ENCODE measurements at regions of chr11 and their contacts with region 1.

Region 1: DNA sequence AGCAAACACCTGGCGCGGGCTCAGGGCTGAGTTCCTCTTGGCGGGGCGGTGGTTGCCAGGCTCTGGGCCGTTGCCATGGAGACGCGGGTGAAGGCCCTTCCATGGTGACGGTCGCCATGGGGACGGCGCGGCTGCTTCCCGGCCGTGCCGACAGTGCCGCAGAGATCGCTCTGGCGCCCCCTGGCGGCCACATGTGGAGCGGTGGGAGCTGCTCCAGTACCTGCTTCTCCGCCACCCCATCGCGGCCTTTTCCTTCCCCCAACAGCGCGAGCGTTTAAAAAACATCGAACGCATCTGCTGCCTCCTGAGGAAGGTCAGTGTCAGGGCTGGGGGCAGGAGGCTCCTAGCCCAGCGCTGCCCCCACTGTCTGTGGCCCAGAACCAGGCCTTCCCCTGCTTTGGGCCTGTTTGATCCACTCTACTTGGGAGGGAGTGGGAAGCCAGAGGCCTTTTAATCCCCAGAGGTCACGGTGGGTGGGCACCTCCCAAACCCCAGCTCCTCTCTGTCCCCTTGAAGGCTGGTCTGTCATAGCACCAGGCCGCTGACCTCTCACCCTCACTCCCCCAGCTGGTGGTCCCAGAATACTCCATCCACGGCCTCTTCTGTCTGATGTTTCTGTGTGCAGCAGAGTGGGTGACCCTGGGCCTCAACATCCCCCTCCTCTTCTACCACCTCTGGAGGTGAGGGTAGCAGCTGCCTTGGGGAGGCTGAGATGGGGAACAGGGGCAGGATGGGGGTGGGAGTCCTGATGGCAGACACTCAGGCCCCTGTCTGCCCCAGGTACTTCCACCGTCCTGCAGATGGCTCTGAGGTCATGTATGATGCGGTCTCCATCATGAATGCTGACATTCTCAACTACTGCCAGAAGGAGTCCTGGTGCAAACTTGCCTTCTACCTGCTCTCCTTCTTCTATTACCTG is 4.8 kb downstream of the CNIH2 start:
- DNase-seq: peak; percentile 87
- H3K4me3 ChIP-seq: no peak overlapping the region
- CTCF ChIP-seq: peak; percentile 89

Region 2: DNA sequence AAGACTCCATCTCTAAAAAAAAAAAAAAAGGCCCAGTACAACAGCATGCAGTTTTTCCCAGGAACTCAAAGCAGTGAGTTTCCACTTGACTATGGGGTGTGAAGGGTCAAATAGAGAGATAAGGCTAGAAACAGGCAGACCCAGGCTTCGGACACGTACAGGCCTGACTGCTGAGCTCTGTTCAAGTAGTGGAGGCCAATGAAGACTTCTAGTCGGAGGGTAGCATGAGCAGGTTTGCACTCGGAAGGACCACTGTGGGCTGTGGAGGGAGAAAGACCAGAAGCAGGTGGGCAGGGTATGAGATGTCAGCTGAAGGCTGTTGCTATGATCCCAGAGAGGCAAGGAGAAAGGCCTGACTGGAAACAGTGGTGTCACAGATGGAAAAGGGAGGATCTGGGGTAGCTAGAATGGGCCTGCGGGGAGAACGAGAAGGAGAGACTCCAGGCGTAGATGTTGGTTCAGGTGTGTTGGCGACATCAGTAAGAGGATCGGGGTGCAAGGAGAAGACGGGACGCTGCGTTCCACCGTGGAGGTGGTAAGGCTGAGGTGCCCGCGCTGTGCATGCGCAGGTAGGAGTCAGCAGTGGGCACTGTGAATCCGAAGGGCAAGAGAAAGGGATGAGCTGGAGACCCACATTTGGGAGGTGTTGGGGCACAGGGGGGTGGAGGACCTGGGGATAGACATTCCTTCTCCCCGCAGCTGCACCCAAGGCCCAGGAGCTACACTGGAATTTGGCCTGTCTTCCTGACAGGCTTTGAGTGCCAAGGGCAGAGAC is 63.7 kb before region 1 on chr11:
- in situ Hi-C with region 1: loop called (anchors 5 kb)
- DNase-seq: no peak
- H3K4me3 ChIP-seq: no peak overlapping the region
- CTCF ChIP-seq: no peak

Region 3: GRCh38 chr11:66242095-66242765 is 40.5 kb before region 1 on chr11:
- in situ Hi-C with region 1: no loop called
- DNase-seq: no peak
- H3K4me3 ChIP-seq: no peak overlapping the region
- CTCF ChIP-seq: no peak

Region 4: DNA sequence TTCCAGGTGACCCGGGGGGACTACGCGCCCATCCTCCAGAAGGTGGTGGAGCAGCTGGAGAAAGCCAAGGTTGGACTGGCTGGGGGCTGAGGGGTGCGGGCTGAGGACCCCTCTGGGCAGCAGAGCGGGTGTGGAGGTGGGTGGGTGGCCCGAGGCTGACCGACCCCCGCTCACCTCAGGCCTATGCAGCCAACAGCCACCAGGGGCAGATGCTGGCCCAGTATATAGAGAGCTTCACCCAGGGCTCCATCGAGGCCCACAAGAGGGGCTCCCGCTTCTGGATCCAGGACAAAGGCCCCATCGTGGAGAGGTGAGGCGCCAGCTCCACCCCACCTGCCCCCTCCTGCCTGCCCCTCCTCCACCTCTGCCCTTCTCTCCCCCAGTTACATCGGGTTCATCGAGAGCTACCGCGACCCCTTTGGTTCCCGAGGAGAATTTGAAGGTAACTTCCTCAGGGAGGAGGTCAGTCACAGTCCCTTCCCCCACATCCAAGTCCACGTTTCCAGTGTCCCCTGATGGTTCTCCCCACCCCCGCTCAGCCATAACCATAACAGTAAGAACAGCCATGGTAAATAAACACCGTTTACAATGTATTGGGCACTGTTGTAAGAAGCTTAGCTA is 208.7 kb after region 1 on chr11:
- in situ Hi-C with region 1: no loop called
- DNase-seq: no peak
- H3K4me3 ChIP-seq: no peak overlapping the region
- CTCF ChIP-seq: peak; percentile 47

Region 5: GRCh38 chr11:67277231-67277961 is 994.7 kb after region 1 on chr11:
- in situ Hi-C with region 1: no loop called
- DNase-seq: no peak
- H3K4me3 ChIP-seq: peak overlapping the region; percentile 23
- CTCF ChIP-seq: no peak